A549 (cell line): ENCODE measurements at regions of chr15 and their contacts with region 1.

Region 1: GRCh38 chr15:66193066-66193465 is 60.5 kb downstream of the MEGF11 start:
- DNase-seq: no peak
- ATAC-seq: no peak
- H3K4me3 ChIP-seq: no peak overlapping the region
- H3K27ac ChIP-seq: no peak overlapping the region
- H3K4me1 ChIP-seq: no peaks in the 10 kb centered on the region
- CTCF ChIP-seq: no peak
- EP300 ChIP-seq: no peak
- POLR2A ChIP-seq: no peak
- RAD21 ChIP-seq: no peak

Region 2: GRCh38 chr15:66178531-66178910 is 14.5 kb before region 1 on chr15:
- CTCF ChIA-PET with region 1: interaction called, 17 read pairs
- POLR2A ChIA-PET with region 1: no interaction called
- DNase-seq: no peak
- ATAC-seq: no peak
- H3K4me3 ChIP-seq: no peak overlapping the region
- H3K27ac ChIP-seq: no peak overlapping the region
- H3K4me1 ChIP-seq: no peaks in the 10 kb centered on the region
- CTCF ChIP-seq: no peak
- EP300 ChIP-seq: no peak
- POLR2A ChIP-seq: no peak
- RAD21 ChIP-seq: no peak